Caco-2 (cell line): ENCODE measurements at regions of chr1 and their contacts with region 1.

Region 1: DNA sequence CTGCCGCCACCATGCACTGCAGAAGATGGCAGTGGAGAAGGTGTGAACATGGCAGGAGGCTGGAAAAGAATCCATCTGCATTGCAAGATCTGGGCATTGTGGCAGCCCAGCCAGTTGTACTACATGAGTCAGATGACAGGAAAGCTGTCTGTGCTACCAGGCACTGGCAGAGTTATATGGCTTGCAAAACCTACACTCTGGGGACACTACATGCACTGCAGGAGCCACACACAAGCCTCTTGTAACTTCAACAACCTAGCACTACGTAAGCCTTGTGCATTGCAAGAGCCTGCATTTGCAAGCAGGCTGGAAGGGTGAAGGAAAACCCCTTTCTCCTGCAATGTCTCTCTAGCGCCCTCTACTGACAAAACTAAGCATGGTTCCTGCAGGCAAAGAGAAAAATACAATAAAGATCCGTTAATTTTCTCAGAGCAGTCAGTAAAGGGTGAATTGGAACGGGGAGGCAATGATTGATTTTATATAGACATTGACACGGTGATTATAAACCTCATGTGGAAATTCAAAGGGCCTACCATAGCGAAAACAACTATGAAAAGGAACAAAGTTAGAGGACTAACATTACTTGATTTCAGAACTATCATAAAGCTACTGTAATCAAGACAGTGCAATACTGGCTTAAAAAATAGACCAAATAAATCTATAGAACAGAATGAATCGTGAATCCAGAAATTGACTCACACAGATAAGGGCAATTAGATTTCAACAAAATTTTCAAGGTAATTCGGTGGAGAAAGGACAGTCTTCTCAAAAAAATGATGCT is 26.2 kb upstream of the DYNLT5 start:
- DNase-seq: peak; percentile 32 to 56
- H3K4me3 ChIP-seq: no peak overlapping the region
- H3K4me3 Mint-ChIP-seq: no peak overlapping the region
- H3K27ac Mint-ChIP-seq: no peak overlapping the region
- H3K4me1 ChIP-seq: no peaks in the 10 kb centered on the region
- H3K4me1 Mint-ChIP-seq: no peaks in the 10 kb centered on the region
- H3K27me3 ChIP-seq: no peaks in the 10 kb centered on the region
- H3K27me3 Mint-ChIP-seq: peaks cover 11% of the 10 kb centered on the region
- CTCF ChIP-seq: peak; percentile 64 to 78

Region 2: GRCh38 chr1:66253330-66253921 is 472.6 kb before region 1 on chr1:
- CTCF ChIA-PET with region 1: no interaction called
- POLR2A ChIA-PET with region 1: no interaction called
- intact Hi-C with region 1: loop called (anchors 1 kb)
- DNase-seq: peak in 1 of 2 experiments; percentile 18
- H3K4me3 ChIP-seq: no peak overlapping the region
- H3K4me3 Mint-ChIP-seq: no peak overlapping the region
- H3K27ac Mint-ChIP-seq: no peak overlapping the region
- H3K4me1 ChIP-seq: no peaks in the 10 kb centered on the region
- H3K4me1 Mint-ChIP-seq: no peaks in the 10 kb centered on the region
- H3K27me3 ChIP-seq: no peaks in the 10 kb centered on the region
- H3K27me3 Mint-ChIP-seq: peaks cover 14% of the 10 kb centered on the region
- CTCF ChIP-seq: peak; percentile 24 to 50

Region 3: GRCh38 chr1:66521721-66522365 is 204.2 kb before region 1 on chr1:
- CTCF ChIA-PET with region 1: no interaction called
- POLR2A ChIA-PET with region 1: no interaction called
- intact Hi-C with region 1: loop called (anchors 10 kb)
- DNase-seq: no peak
- H3K4me3 ChIP-seq: no peak overlapping the region
- H3K4me3 Mint-ChIP-seq: no peak overlapping the region
- H3K27ac Mint-ChIP-seq: no peak overlapping the region
- H3K4me1 ChIP-seq: peaks cover 15% of the 10 kb centered on the region
- H3K4me1 Mint-ChIP-seq: no peaks in the 10 kb centered on the region
- H3K27me3 ChIP-seq: no peaks in the 10 kb centered on the region
- H3K27me3 Mint-ChIP-seq: no peaks in the 10 kb centered on the region
- CTCF ChIP-seq: no peak

Region 4: DNA sequence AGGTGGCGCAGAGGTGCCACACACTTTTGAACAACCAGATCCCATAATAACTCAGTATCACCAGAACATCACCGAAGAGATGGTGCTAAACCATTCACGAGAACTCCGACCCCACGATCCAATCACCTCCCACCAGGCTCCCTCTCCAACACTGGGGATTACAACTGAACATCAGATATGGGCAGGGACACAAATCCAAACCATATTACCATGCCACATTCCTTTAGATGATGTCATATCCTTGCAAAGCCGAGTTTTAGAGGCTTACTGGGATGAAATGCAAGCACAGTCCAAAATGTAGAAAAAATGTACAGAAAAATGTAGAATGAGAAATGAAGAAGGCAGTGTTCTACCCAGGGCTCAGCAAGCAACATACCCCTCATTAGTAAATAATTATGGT is 127.4 kb before region 1 on chr1:
- CTCF ChIA-PET with region 1: no interaction called
- POLR2A ChIA-PET with region 1: no interaction called
- intact Hi-C with region 1: loop called (anchors 5 kb)
- DNase-seq: no peak
- H3K4me3 ChIP-seq: no peak overlapping the region
- H3K4me3 Mint-ChIP-seq: no peak overlapping the region
- H3K27ac Mint-ChIP-seq: no peak overlapping the region
- H3K4me1 ChIP-seq: no peaks in the 10 kb centered on the region
- H3K4me1 Mint-ChIP-seq: no peaks in the 10 kb centered on the region
- H3K27me3 ChIP-seq: no peaks in the 10 kb centered on the region
- H3K27me3 Mint-ChIP-seq: no peaks in the 10 kb centered on the region
- CTCF ChIP-seq: no peak

Region 5: DNA sequence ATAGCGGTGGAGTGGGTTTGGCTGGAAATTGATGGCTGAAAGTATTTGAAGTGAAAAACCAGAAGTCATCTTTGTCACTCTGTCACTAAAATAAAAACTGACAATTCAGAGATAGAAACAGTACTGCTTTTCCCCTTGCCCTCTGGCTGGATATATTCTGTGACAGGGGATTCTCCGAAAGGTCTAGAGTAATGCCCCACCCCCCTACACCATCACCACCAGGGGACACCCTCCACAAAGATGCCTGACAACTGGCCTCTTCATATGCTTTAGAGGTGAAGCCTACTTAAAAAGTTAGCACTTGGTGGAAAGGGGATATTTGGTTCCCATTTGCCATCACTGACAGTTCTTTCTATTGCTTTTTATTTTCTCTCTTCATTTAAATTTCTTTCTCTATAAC is 118.6 kb before region 1 on chr1:
- CTCF ChIA-PET with region 1: no interaction called
- POLR2A ChIA-PET with region 1: no interaction called
- intact Hi-C with region 1: loop called (anchors 5 kb)
- DNase-seq: peak in 1 of 2 experiments; percentile 2
- H3K4me3 ChIP-seq: no peak overlapping the region
- H3K4me3 Mint-ChIP-seq: no peak overlapping the region
- H3K27ac Mint-ChIP-seq: no peak overlapping the region
- H3K4me1 ChIP-seq: no peaks in the 10 kb centered on the region
- H3K4me1 Mint-ChIP-seq: no peaks in the 10 kb centered on the region
- H3K27me3 ChIP-seq: no peaks in the 10 kb centered on the region
- H3K27me3 Mint-ChIP-seq: no peaks in the 10 kb centered on the region
- CTCF ChIP-seq: peak in 1 of 2 experiments; percentile 8

Region 6: GRCh38 chr1:66671455-66671854 is 54.6 kb before region 1 on chr1:
- CTCF ChIA-PET with region 1: no interaction called
- POLR2A ChIA-PET with region 1: no interaction called
- intact Hi-C with region 1: no loop called
- DNase-seq: no peak
- H3K4me3 ChIP-seq: no peak overlapping the region
- H3K4me3 Mint-ChIP-seq: no peak overlapping the region
- H3K27ac Mint-ChIP-seq: no peak overlapping the region
- H3K4me1 ChIP-seq: no peaks in the 10 kb centered on the region
- H3K4me1 Mint-ChIP-seq: no peaks in the 10 kb centered on the region
- H3K27me3 ChIP-seq: no peaks in the 10 kb centered on the region
- H3K27me3 Mint-ChIP-seq: no peaks in the 10 kb centered on the region
- CTCF ChIP-seq: no peak